ENCODE measurements at regions of chr12 and their contacts with region 1.

Region 1: DNA sequence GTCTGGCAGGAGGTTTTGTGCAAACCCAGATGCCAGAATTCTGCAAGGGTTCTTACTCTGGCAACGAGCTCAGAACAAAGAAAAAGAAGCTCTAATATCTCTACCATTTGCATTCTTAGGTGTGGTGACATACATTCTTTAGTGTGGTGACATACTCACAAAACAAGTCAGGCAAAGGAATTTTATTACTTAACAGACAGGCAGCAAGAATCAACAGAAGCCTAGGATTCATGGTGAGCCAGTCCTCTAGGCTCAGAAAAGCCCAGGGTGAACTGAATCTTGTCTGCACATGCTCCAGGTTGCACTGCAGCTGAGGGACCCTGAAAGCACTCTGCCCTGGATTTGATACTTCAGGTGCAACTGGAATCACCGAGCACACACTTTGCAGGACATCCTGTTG is 122.4 kb upstream of the PTPRQ start:
- DNase-seq: no peak
- H3K4me3 ChIP-seq: no peak overlapping the region
- CTCF ChIP-seq: no peak
- POLR2A ChIP-seq: no peak

Region 2: DNA sequence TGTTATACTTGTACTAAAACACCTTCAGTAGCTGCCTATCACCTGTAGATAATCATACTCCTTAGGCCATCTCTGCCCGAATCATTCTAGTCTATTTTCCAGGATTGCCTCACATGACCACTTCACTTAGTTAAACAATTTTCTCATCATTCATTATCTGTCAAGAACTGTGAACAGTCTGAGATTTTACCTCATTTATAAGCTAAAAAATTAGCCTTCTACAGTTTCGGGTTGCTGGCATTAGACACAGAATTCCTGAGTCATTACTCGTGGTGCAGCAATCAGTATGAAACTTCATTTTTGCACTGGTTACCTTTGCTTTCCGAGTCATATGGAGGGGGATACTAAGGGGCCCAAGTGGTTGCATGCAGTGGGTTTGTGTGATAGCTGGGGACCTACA is 280.0 kb before region 1 on chr12:
- intact Hi-C with region 1: no loop called
- DNase-seq: no peak
- H3K4me3 ChIP-seq: no peak overlapping the region
- CTCF ChIP-seq: no peak
- POLR2A ChIP-seq: no peak

Region 3: GRCh38 chr12:80400571-80400991 is 78.9 kb after region 1 on chr12:
- intact Hi-C with region 1: no loop called
- DNase-seq: peak in 1 of 2 donors; percentile 80
- H3K4me3 ChIP-seq: no peak overlapping the region
- CTCF ChIP-seq: no peak
- POLR2A ChIP-seq: no peak

Region 4: GRCh38 chr12:82279539-82280058 is 1958.0 kb after region 1 on chr12:
- intact Hi-C with region 1: loop called (anchors 10 kb)
- DNase-seq: no peak
- H3K4me3 ChIP-seq: no peak overlapping the region
- CTCF ChIP-seq: no peak
- POLR2A ChIP-seq: no peak